ENCODE measurements at regions of chr13 and their contacts with region 1.

Region 1: DNA sequence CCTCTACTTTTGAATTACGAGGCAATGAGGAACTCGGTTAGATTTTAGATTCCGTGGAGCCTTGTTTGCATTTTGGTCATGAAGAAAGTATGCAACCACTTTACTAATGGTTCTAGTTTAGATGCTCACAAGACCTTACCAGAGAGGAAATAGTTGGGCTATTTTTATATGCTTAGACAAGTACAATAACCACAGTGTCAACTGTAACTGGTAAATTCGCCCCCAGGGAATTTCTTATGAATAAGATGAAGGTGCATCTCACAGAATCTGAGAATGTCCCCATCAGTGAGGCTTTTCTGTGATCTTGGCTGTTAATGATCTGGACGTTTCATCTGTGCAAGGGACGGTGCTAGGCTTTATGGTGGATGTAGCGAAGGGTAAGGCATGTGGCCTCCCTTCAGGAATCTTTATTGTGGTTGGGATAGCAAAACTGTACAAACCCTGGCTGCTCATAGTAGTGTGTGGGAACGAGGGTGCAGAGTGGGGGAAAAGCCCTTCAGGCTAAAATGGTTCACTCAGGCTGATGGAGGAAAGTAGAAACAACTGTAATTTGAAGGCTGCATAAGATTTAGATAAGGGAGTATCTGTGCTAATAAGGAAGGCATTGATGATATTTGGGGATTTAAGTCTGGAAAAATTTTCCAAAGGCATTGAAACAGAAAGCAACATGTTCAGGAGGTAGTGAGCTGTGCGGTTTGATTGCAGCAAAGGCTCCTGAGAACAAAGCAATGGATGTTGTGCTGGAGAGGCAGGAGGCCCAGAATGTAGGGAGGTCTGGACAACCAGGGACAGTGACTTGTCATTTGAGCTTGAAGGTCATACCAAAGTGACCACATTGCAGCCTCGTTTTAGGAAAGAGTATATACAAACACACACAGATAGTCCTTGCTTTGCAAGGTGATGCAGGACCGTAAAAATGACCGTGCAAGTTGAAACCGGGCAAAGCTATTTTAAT is 28.4 kb downstream of the UBAC2 start:
- DNase-seq: peak in 1 of 10 donors; percentile 24
- ATAC-seq: peak; percentile 49 to 58
- H3K4me3 Mint-ChIP-seq: peak overlapping the region; percentile 66 to 89 (median 81)
- H3K27ac Mint-ChIP-seq: peak overlapping the region; percentile 73 to 95 (median 90)
- H3K4me1 Mint-ChIP-seq: peaks cover 42 to 91% (median 79%) of the 10 kb centered on the region in 4 donors
- H3K27me3 Mint-ChIP-seq: no peaks in the 10 kb centered on the region

Region 2: DNA sequence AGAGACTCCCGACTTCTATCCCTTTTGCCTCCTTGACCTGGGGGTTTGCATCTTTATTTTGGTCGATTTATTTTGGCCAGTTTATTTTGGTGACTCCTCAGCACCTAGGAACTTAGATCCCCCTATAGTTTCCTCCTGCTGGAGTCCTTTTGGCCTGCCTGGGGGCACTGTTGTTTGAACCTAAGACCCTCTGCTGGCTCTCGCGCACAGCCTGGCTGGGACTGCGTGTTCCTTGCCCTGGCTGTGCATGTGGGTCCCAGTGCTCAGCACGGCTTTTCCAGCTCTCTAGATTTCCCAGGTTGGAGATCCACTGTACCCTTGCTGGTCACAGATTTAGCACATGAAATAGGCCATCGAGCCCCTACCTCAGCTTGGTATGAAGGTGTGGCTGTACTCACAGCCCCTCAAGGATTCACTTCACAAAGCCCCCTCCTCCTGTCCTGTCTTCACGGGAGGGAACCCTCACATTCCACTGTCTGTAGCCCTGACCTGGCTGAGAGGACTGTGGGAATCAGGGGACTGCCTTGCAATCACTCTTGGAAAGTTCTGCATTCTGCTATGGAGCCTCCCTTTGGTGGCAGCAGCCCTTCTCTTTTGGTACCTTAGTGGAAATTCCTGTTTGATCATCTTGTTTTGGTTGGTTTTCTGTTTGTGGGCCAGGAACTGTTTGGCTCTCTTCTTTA is 20.0 kb before region 1 on chr13:
- POLR2A ChIA-PET with region 1: interaction called, 20 read pairs
- DNase-seq: no peak
- ATAC-seq: no peak
- H3K4me3 Mint-ChIP-seq: peak overlapping the region; percentile 41 to 93 (median 62)
- H3K27ac Mint-ChIP-seq: peak overlapping the region; percentile 56 to 98 (median 88)
- H3K4me1 Mint-ChIP-seq: peaks cover 68 to 92% (median 89%) of the 10 kb centered on the region in 4 donors
- H3K27me3 Mint-ChIP-seq: peaks cover 0 to 1% (median 0%) of the 10 kb centered on the region in 5 donors

Region 3: GRCh38 chr13:99214232-99214631 is 14.8 kb before region 1 on chr13:
- POLR2A ChIA-PET with region 1: interaction called, 39 read pairs
- DNase-seq: peak in 6 of 10 donors; percentile 33 to 73 (median 54)
- ATAC-seq: peak; percentile 31 to 32
- H3K4me3 Mint-ChIP-seq: peak overlapping the region; percentile 59 to 98 (median 93)
- H3K27ac Mint-ChIP-seq: peak overlapping the region; percentile 84 to 100 (median 99)
- H3K4me1 Mint-ChIP-seq: peaks cover 46 to 88% (median 85%) of the 10 kb centered on the region in 4 donors
- H3K27me3 Mint-ChIP-seq: no peaks in the 10 kb centered on the region

Region 4: DNA sequence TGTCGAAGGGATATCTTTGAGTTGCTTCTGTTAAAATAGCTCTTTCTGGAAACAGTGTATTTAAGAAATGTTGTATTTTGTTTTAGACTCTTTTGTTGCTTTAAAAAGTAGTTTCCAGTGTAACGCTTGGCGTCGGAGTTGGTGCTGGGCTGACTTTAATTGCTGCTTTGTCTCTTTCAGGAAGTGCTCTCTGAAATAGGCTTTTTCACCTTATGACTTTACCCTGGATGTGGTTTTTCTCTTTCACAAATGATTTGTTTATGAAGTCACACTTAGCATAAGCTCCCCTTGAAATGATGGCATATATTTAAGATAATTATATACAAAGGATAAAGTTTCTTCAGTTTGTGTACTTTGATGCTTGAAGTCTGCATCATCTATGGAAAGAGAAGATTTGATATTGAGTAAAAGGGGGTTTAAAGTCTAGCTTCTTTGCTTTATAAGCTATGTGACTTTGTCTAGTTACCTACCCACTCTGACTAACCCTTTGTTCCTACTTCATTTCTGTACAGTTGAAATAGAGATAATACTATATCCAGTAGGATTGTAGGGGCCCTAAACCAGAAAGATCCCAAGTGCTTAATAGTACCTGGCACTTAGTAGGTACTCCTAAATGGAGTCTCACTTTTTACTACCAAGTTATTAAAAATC is 29.3 kb after region 1 on chr13 and contains the start of gene GPR18:
- POLR2A ChIA-PET with region 1: interaction called, 30 read pairs
- DNase-seq: peak in 6 of 10 donors; percentile 17 to 78 (median 63)
- ATAC-seq: peak; percentile 74 to 81
- H3K4me3 Mint-ChIP-seq: peak within 1 kb of the TSS; percentile 87 to 98 (median 94)
- H3K27ac Mint-ChIP-seq: peak within 1 kb of the TSS; percentile 90 to 99 (median 98)
- H3K4me1 Mint-ChIP-seq: peaks cover 29 to 87% (median 74%) of the 10 kb centered on the region in 4 donors
- H3K27me3 Mint-ChIP-seq: no peaks in the 10 kb centered on the region
- polyA plus RNA-seq, gene GPR18: 22.2 to 37.0 (median 26.1) TPM